Activated CD8-positive, alpha-beta T cell treated with anti-CD3 and anti-CD28 coated beads, Interleukin-2, amount 10 ng/mL, durations not matched to agents 7 days and 5 days (primary cell): ENCODE measurements at regions of chr19 and their contacts with region 1.

Region 1: GRCh38 chr19:43519436-43520088 is 7.4 kb downstream of the ETHE1 start:
- DNase-seq: peak; percentile 83
- ATAC-seq: peak; percentile 71
- H3K4me3 Mint-ChIP-seq: no peak overlapping the region
- H3K27ac Mint-ChIP-seq: peak overlapping the region; percentile 7
- H3K4me1 Mint-ChIP-seq: peaks cover 14% of the 10 kb centered on the region
- H3K27me3 Mint-ChIP-seq: no peaks in the 10 kb centered on the region

Region 2: GRCh38 chr19:43425567-43426392 is 93.8 kb before region 1 on chr19:
- CTCF ChIA-PET with region 1: interaction called, 70 read pairs
- POLR2A ChIA-PET with region 1: no interaction called
- DNase-seq: no peak
- ATAC-seq: no peak
- H3K4me3 Mint-ChIP-seq: no peak overlapping the region
- H3K27ac Mint-ChIP-seq: no peak overlapping the region
- H3K4me1 Mint-ChIP-seq: peaks cover 4% of the 10 kb centered on the region
- H3K27me3 Mint-ChIP-seq: peaks cover 2% of the 10 kb centered on the region

Region 3: DNA sequence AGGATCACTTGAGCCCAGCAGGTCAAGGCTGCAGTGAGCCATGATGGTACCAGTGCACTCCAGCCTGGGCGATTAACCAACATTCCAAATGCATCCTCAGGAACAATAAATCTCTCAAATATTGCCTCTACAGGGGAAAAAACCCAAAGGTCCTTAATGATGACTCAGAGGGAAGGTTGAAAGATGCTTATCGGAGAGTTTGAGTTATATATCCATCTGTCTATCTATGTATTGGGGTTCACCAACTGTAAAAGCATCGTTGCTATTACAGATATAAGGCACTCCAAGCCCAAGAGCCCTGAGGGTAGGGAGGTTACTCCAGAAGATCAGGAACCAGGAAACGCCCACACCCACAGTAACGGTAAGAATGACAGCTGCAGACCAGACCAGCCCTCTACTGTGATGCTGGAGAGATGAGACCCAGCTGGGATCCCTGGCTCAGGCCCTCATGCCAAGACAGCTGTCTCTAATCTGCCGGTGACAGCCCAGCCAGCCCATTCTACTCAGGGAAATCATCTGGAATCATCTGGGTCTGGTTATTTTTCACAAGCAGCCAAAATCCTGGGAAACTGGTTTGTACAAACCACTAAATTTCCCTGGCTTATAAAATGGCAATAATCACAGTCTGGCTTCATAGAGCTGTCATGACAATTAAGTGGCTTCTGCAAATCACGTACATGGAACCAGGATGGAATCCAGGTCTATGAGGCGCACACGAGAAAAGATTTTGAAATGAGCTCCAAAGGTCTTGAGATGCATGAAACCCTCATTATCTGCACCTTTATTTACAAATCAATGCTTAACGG is 81.1 kb before region 1 on chr19:
- CTCF ChIA-PET with region 1: interaction called, 387 read pairs
- POLR2A ChIA-PET with region 1: interaction called, 7 read pairs
- DNase-seq: no peak
- ATAC-seq: no peak
- H3K4me3 Mint-ChIP-seq: peak overlapping the region; percentile 22
- H3K27ac Mint-ChIP-seq: peak overlapping the region; percentile 86
- H3K4me1 Mint-ChIP-seq: peaks cover 35% of the 10 kb centered on the region
- H3K27me3 Mint-ChIP-seq: no peaks in the 10 kb centered on the region

Region 4: GRCh38 chr19:43457809-43458208 is 61.8 kb before region 1 on chr19:
- CTCF ChIA-PET with region 1: interaction called, 29 read pairs
- POLR2A ChIA-PET with region 1: interaction called, 6 read pairs
- DNase-seq: no peak
- ATAC-seq: no peak
- H3K4me3 Mint-ChIP-seq: no peak overlapping the region
- H3K27ac Mint-ChIP-seq: no peak overlapping the region
- H3K4me1 Mint-ChIP-seq: peaks cover 11% of the 10 kb centered on the region
- H3K27me3 Mint-ChIP-seq: no peaks in the 10 kb centered on the region

Region 5: GRCh38 chr19:43463381-43464136 is 56.0 kb before region 1 on chr19:
- CTCF ChIA-PET with region 1: interaction called, 29 read pairs
- POLR2A ChIA-PET with region 1: interaction called, 6 read pairs
- DNase-seq: peak; percentile 99
- ATAC-seq: peak; percentile 88
- H3K4me3 Mint-ChIP-seq: peak overlapping the region; percentile 85
- H3K27ac Mint-ChIP-seq: peak overlapping the region; percentile 96
- H3K4me1 Mint-ChIP-seq: peaks cover 44% of the 10 kb centered on the region
- H3K27me3 Mint-ChIP-seq: no peaks in the 10 kb centered on the region

Region 6: GRCh38 chr19:43503501-43504425 is 15.8 kb before region 1 on chr19:
- CTCF ChIA-PET with region 1: interaction called, 32 read pairs
- POLR2A ChIA-PET with region 1: interaction called, 5 read pairs
- DNase-seq: peak; percentile 98
- ATAC-seq: peak; percentile 95
- H3K4me3 Mint-ChIP-seq: peak overlapping the region; percentile 88
- H3K27ac Mint-ChIP-seq: peak overlapping the region; percentile 97
- H3K4me1 Mint-ChIP-seq: peaks cover 27% of the 10 kb centered on the region
- H3K27me3 Mint-ChIP-seq: no peaks in the 10 kb centered on the region

Region 7: DNA sequence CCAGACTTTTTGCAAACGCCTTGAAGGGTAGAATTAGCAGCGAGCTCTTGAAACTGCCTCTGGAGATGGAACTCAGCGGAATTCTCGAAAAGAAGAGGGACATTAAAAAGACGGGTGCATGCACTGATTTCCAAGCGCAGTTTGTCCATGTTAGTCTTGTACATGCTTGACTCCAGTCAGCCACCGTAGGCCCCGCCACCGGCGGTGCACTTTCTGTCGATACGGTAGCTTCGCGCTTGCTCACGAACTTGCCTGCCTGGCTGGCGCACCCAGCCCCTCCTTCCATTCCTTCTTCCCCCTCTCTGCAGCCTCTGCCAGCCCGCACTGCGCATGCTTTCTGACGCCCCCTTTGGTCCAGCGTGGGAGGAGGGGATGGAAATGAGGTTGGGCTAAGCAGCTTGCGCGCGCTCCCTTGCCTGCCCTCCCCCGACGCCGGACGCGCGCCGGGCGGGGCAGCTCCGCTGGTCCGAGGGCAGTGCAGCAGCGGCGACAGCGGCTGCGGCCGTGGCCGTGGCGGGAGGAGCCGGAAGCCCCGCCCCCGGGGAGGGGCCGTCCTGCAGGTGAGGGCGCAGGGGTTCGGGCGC is 13.5 kb after region 1 on chr19 and contains the start of gene ZNF575:
- CTCF ChIA-PET with region 1: interaction called, 24 read pairs
- POLR2A ChIA-PET with region 1: interaction called, 5 read pairs
- DNase-seq: peak; percentile 91
- ATAC-seq: peak; percentile 66
- H3K4me3 Mint-ChIP-seq: peak within 1 kb of the TSS; percentile 87
- H3K27ac Mint-ChIP-seq: peak within 1 kb of the TSS; percentile 98
- H3K4me1 Mint-ChIP-seq: peaks cover 27% of the 10 kb centered on the region
- H3K27me3 Mint-ChIP-seq: no peaks in the 10 kb centered on the region
- total RNA-seq, gene ZNF575: 3.4 to 3.7 TPM

Region 8: DNA sequence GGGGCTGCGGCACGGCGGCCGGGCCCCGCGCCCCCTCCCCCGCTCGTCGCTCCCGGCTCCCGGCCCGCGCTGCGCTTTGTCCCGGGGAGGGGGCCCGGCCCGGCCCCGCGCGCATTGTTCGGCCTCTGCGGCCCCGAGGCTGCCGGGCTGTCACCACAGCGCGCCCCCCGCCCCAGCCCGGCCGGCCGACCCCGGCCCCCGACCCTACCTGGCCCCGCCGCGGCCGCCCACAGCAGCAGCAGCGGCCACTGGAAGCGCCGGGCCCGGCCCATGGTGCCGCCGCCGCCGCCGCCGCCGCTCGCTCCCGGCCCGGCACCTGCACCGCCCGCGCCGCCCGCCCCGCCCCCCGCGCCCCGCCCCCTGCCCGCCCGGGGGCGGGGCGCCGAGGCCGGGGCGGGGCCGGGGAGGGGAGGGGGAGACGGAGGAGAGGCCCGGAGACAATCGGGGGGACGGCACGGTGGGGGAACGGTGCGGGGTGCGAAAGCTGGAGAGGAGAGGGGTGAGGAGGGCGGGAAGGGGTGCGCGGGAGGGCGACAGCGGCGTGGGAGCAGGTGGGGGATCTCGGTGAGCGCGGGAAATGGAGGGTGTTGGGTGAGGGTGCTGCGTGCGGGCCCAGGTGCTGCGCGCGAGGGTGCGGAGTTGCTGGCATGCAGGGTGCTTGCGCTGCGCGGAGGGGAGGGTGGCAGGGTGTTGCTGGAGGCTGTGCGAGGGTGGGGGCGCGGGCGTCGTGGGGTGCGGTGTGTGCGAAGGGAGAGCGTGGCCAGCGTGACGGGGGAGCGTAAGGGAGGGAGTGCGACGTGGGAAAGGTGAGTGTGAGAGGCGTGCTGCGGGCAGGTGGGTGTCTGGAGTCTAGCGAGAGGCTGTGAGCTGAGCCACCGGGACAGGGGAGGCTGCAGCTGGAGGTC is 120.2 kb after region 1 on chr19 and contains the start of gene CADM4:
- CTCF ChIA-PET with region 1: no interaction called
- POLR2A ChIA-PET with region 1: no interaction called
- DNase-seq: peak; percentile 48
- ATAC-seq: peak; percentile 84
- H3K4me3 Mint-ChIP-seq: peak within 1 kb of the TSS; percentile 70
- H3K27ac Mint-ChIP-seq: peak within 1 kb of the TSS; percentile 11
- H3K4me1 Mint-ChIP-seq: peaks cover 17% of the 10 kb centered on the region
- H3K27me3 Mint-ChIP-seq: peaks cover 55% of the 10 kb centered on the region
- total RNA-seq, gene CADM4: 0.10 to 0.40 TPM